Activated T-helper 1 cell treated with anti-CD3 and anti-CD28 coated beads, Interleukin-12 subunit alpha, Interleukin-12 subunit beta, Interleukin-2, Interleukin-4 antibody, amounts not matched to agents 30 ng/mL and 10 ng/mL and 1 ng/mL, durations not matched to agents 14 hours and 24 hours and 36 hours (primary cell): ENCODE measurements at regions of chr6 and their contacts with region 1.

Region 1: DNA sequence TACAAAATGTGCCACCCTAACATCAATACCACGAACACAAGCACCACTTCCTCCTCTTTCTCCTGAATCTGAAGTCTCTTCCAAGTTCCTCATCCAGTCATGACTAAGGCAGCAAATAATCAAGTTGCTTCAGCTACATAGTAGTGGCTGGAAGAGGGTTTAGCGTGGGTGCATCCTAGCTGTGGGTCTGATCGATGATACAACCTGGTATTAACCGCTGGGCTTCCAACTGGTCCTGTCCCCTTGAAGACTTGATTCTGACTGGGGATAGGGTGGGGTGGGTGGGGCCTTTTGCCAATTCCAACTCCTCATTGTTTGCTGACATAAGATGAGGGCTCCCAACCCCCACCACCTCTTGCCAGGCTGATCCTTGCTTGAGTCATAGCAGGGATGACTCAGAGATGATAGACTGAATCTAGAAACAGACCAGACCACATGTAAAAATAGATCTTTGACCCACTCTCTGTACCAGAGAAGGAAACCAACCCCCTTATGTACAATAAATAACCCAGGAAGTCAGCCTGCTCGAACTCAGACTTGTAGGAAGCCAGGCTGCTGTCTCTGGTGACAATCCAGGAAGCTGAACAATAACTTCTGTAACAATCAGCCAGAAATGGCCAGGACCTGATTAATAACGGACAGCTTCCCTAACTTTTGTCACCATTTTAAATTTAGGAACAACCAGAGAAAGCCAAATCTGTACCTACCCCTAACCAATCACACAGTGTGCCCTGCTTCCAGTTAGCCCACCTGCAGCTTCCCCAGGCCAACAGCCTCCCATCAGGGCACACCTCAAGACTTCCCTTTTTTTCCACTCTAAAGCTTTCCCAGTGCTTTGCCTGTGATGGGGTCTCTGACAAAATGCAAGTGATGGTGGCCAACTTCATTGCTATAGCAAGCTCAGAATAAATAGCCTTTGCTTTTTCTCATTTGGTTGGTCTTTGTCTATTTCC is 68.9 kb upstream of the FAM184A start:
- DNase-seq: peak; percentile 27
- H3K4me3 Mint-ChIP-seq: no peak overlapping the region
- H3K27ac Mint-ChIP-seq: peak overlapping the region; percentile 77
- H3K4me1 Mint-ChIP-seq: peaks cover 62% of the 10 kb centered on the region
- H3K27me3 Mint-ChIP-seq: no peaks in the 10 kb centered on the region

Region 2: GRCh38 chr6:119078376-119079282 is 68.7 kb before region 1 on chr6 and contains the start of gene FAM184A:
- intact Hi-C with region 1: no loop called
- DNase-seq: peak; percentile 73
- H3K4me3 Mint-ChIP-seq: peak within 1 kb of the TSS; percentile 92
- H3K27ac Mint-ChIP-seq: peak within 1 kb of the TSS; percentile 91
- H3K4me1 Mint-ChIP-seq: peaks cover 43% of the 10 kb centered on the region
- H3K27me3 Mint-ChIP-seq: peaks cover 8% of the 10 kb centered on the region
- total RNA-seq, gene FAM184A: 9.0 and 9.4 TPM in 2 replicates

Region 3: GRCh38 chr6:119129148-119129967 is 18.0 kb before region 1 on chr6:
- intact Hi-C with region 1: loop called (anchors 1 kb)
- DNase-seq: no peak
- H3K4me3 Mint-ChIP-seq: no peak overlapping the region
- H3K27ac Mint-ChIP-seq: peak overlapping the region; percentile 82
- H3K4me1 Mint-ChIP-seq: peaks cover 12% of the 10 kb centered on the region
- H3K27me3 Mint-ChIP-seq: peaks cover 9% of the 10 kb centered on the region

Region 4: DNA sequence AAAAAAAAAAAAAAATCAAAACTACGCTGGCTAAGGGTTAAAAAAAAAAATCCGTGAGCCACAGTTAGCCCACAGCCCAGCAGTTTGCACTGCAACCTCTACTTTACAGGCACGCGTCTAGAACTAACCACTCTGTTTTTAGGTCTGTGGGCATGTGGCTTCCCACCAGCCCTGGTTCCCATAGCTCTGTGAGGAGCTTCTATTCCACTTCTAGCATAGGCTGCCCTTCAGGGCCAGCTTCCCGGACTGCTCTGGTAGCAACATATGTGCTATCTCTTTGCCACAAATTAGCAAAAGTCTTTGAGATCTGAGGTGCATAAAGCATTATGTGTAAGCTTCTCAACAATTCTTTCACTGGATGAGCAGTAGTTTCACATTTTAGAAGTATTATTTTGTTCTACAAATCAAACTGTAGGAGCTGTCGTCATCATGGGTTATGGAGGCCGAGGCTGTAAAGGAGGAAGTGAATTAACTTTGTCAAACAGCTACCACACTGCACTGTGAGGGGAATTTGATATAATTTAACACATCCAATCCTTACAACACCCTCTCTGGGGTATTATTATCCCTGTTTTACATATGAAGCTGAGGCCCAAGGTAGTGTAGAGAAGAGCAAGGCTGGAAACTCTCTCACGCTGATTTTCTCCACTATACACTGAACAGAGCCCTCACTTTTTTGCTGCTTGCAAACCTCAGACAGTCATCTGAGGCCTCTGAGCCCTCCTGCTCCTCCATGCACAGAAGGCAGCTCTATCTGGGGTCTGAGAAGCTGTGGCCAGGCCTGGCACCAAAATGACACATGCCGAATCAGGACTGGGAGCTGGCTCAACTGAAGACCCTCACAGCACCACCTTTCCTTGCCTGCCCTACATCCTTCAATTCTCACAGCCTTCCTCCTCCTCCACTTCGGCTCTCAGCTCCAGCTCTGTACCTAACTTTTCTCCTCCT is 166.8 kb after region 1 on chr6:
- intact Hi-C with region 1: loop called (anchors 1 kb)
- DNase-seq: peak; percentile 45
- H3K4me3 Mint-ChIP-seq: peak overlapping the region; percentile 73
- H3K27ac Mint-ChIP-seq: peak overlapping the region; percentile 99
- H3K4me1 Mint-ChIP-seq: peaks cover 76% of the 10 kb centered on the region
- H3K27me3 Mint-ChIP-seq: no peaks in the 10 kb centered on the region

Region 5: GRCh38 chr6:119637768-119638167 is 490.4 kb after region 1 on chr6:
- intact Hi-C with region 1: loop called (anchors 10 kb)
- DNase-seq: no peak
- H3K4me3 Mint-ChIP-seq: no peak overlapping the region
- H3K27ac Mint-ChIP-seq: no peak overlapping the region
- H3K4me1 Mint-ChIP-seq: peaks cover 7% of the 10 kb centered on the region
- H3K27me3 Mint-ChIP-seq: no peaks in the 10 kb centered on the region

Region 6: DNA sequence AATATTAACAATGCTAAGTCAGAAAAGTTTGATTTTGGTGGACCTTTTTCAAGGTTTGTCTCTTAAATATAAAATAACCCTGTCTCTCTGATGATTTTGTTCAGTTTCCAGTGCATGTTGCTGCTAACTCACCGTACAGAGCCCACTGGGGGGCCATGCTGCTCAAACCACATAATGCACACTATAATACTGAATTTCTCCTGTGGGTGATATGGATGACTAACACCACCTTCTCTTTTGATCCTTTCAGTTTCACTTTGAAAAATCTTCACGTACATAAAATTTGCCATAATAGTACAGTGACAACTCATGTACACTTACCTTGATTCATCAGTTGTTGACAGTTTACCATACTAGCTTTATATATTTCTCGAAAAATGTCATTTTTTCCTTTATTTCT is 708.8 kb after region 1 on chr6:
- intact Hi-C with region 1: loop called (anchors 5 kb)
- DNase-seq: no peak
- H3K4me3 Mint-ChIP-seq: peak overlapping the region; percentile 56
- H3K27ac Mint-ChIP-seq: no peak overlapping the region
- H3K4me1 Mint-ChIP-seq: peaks cover 14% of the 10 kb centered on the region
- H3K27me3 Mint-ChIP-seq: peaks cover 9% of the 10 kb centered on the region